Ovary (tissue), 10 donors: ENCODE measurements at regions of chr6 and their contacts with region 1.

Region 1: GRCh38 chr6:86937219-86938079 is at the start of gene HTR1E:
- DNase-seq: peak; percentile 63 to 80 (median 72)
- H3K4me3 ChIP-seq: peak within 1 kb of the TSS; percentile 48
- H3K27ac ChIP-seq: peak within 1 kb of the TSS in 1 of 2 donors; percentile 36
- H3K4me1 ChIP-seq: no peaks in the 10 kb centered on the region
- H3K27me3 ChIP-seq: no peaks in the 10 kb centered on the region
- CTCF ChIP-seq: peak; percentile 32 to 60 (median 48)
- EP300 ChIP-seq: no peak
- POLR2A ChIP-seq: no peak
- total RNA-seq, gene HTR1E: 0.60 to 4.4 (median 0.89) TPM

Region 2: GRCh38 chr6:85923013-85923430 is 1014.4 kb before region 1 on chr6:
- intact Hi-C with region 1: loop called in 1 of 4 experiments (anchors 2 kb)
- DNase-seq: peak in 4 of 5 donors; percentile 33 to 49 (median 38)
- H3K4me3 ChIP-seq: no peak overlapping the region
- H3K27ac ChIP-seq: no peak overlapping the region
- H3K4me1 ChIP-seq: peaks cover 2% of the 10 kb centered on the region
- H3K27me3 ChIP-seq: no peaks in the 10 kb centered on the region
- CTCF ChIP-seq: peak; percentile 46 to 69 (median 48)
- EP300 ChIP-seq: no peak
- POLR2A ChIP-seq: no peak

Region 3: GRCh38 chr6:87054143-87054833 is 116.8 kb after region 1 on chr6:
- intact Hi-C with region 1: no loop called
- DNase-seq: no peak
- H3K4me3 ChIP-seq: no peak overlapping the region
- H3K27ac ChIP-seq: no peak overlapping the region
- H3K4me1 ChIP-seq: no peaks in the 10 kb centered on the region
- H3K27me3 ChIP-seq: no peaks in the 10 kb centered on the region
- CTCF ChIP-seq: no peak
- EP300 ChIP-seq: no peak
- POLR2A ChIP-seq: no peak